Heart right ventricle (tissue), 16 donors: ENCODE measurements at regions of chr11 and their contacts with region 1.

Region 1: DNA sequence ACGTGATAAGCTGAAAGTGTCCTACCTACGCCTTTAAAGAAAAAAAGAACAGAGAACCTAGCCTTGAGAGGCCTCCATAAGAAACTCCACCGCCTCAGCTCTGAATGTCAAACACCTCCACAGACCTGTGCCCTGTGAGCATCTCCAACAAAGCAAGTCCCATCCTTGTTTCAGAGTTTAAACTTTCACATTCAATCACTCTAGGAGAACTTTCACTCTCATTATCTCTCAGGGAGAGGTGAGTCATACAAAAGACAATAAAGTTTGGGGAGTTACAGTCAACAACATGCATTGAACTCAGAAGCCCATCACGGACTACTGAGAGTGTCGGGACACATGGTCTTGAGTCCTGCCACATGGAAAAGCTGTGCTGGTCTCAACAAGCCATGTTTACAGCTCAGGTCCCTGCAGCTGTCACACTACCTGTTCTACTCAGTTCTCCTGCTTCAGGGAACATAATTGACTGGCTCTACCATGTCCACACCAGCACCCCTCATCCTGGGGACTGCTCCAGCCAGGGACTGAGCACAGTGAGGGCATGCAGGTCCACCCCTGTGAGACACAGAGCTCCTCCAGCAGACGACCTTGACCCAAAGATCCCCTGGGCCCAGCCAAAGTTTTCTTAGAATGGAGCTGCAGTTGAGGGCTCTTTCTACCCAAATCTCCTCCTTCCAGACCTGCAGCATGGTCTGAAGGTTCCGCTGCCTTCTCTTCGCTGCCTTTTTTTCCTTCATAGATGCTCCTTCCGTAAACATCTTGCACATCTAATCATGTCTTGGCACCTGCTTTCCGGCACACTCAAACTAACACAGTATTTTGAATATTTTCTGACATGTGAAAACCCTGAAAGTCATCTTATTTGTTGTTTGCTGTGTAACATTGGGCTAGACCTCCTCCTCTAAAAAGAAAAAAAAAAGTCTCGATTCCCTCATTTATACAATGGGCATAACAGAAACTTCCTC is 114.9 kb downstream of the ETS1 start:
- DNase-seq: no peak
- ATAC-seq: no peak
- H3K4me3 ChIP-seq: no peak overlapping the region
- H3K27ac ChIP-seq: peak overlapping the region in 7 of 10 donors; percentile 35 to 84 (median 50)
- H3K4me1 ChIP-seq: peaks cover 30 to 100% (median 96%) of the 10 kb centered on the region in 9 donors
- H3K27me3 ChIP-seq: no peaks in the 10 kb centered on the region
- CTCF ChIP-seq: no peak

Region 2: DNA sequence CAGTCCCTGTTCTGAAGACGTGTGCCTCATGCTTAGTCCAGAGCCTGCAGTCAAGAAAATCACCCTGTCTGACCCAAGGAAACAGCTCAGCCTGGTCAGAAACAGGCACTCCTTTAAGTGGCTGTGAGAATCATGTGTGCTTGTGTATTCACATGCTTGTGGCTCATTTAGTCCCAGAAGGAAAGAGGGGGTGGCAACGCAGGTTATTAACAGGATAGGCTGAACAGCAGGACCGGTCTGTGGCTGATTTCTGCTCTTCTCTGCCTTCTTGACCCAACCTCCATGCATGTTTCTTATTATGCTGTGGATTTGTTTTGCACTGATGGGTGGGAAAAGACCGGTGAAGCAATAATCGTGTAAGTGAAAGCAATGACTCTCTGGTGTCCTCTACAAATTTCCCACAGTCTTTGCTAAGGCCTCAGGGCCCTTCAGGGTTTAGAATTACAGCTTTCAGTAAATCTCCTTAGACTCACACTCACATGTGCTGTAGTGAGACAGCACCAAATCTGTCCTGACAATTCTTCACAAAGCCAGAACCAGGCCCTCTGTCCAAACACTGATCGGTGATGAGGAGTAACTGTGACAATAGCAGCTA is 173.2 kb before region 1 on chr11:
- intact Hi-C with region 1: loop called in 5 of 10 experiments (anchors 5 to 10 kb)
- DNase-seq: no peak
- ATAC-seq: peak in 7 of 8 donors; percentile 19 to 52 (median 34)
- H3K4me3 ChIP-seq: no peak overlapping the region
- H3K27ac ChIP-seq: peak overlapping the region in 9 of 10 donors; percentile 22 to 81 (median 65)
- H3K4me1 ChIP-seq: peaks cover 4 to 70% (median 44%) of the 10 kb centered on the region in 9 donors
- H3K27me3 ChIP-seq: no peaks in the 10 kb centered on the region
- CTCF ChIP-seq: no peak

Region 3: DNA sequence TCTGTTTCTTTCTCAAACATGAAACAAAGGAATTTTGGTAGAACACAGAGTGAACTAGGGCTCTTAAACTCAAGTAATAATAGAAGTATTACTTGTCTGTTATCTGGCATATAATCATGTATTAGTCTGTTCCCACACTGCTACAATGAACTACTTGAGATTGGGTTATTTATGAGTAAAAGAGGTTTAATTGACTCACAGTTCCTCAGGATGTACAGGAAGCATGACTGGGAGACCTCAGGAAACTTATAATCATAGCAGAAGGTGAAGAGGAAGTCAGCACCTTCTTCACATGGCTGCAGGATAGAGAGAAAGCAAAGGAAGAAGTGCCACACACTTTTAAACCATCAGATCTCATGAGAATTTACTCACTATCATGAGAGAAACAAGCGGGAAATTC is 158.5 kb before region 1 on chr11:
- intact Hi-C with region 1: no loop called
- DNase-seq: no peak
- ATAC-seq: no peak
- H3K4me3 ChIP-seq: no peak overlapping the region
- H3K27ac ChIP-seq: no peak overlapping the region
- H3K4me1 ChIP-seq: peaks cover 0 to 12% (median 0%) of the 10 kb centered on the region in 9 donors
- H3K27me3 ChIP-seq: no peaks in the 10 kb centered on the region
- CTCF ChIP-seq: no peak

Region 4: GRCh38 chr11:128336203-128336602 is 136.2 kb before region 1 on chr11:
- intact Hi-C with region 1: loop called in 4 of 10 experiments (anchors 5 to 10 kb)
- DNase-seq: peak; percentile 61 to 67
- ATAC-seq: peak; percentile 24 to 83 (median 68)
- H3K4me3 ChIP-seq: no peak overlapping the region
- H3K27ac ChIP-seq: peak overlapping the region in 7 of 10 donors; percentile 49 to 91 (median 66)
- H3K4me1 ChIP-seq: peaks cover 0 to 62% (median 40%) of the 10 kb centered on the region in 9 donors
- H3K27me3 ChIP-seq: no peaks in the 10 kb centered on the region
- CTCF ChIP-seq: peak in 1 of 9 donors; percentile 10

Region 5: DNA sequence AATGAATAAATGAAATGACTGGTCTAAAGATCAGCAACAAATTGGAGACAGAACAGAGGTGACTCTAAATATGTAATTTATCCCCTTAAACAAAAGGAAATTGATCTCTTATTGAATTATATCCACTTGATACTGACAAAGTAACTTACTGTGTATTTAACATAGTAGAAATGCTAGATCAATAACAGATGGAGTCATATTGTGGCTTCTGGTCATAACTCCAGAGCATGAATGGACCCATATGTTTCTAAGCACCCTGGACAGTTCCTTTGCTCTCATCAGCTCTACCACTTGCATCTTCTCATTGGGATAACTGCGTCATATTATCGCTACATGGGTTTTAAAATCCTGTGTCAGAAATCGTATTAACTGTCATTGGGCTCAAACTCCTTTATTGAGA is 107.4 kb before region 1 on chr11:
- intact Hi-C with region 1: no loop called
- DNase-seq: no peak
- ATAC-seq: no peak
- H3K4me3 ChIP-seq: no peak overlapping the region
- H3K27ac ChIP-seq: no peak overlapping the region
- H3K4me1 ChIP-seq: peaks cover 0 to 7% (median 0%) of the 10 kb centered on the region in 9 donors
- H3K27me3 ChIP-seq: no peaks in the 10 kb centered on the region
- CTCF ChIP-seq: no peak

Region 6: GRCh38 chr11:128422576-128423370 is 49.6 kb before region 1 on chr11:
- intact Hi-C with region 1: loop called in 1 of 10 experiments (anchors 5 kb)
- DNase-seq: peak; percentile 66 to 80
- ATAC-seq: peak in 6 of 8 donors; percentile 44 to 95 (median 66)
- H3K4me3 ChIP-seq: peak overlapping the region in 1 of 10 donors; percentile 6
- H3K27ac ChIP-seq: peak overlapping the region in 8 of 10 donors; percentile 22 to 88 (median 76)
- H3K4me1 ChIP-seq: peaks cover 16 to 48% (median 37%) of the 10 kb centered on the region in 9 donors
- H3K27me3 ChIP-seq: no peaks in the 10 kb centered on the region
- CTCF ChIP-seq: no peak

Region 7: GRCh38 chr11:128522055-128522942 is 49.9 kb after region 1 on chr11:
- intact Hi-C with region 1: loop called in 2 of 10 experiments (anchors 5 to 10 kb)
- DNase-seq: peak; percentile 95 to 96
- ATAC-seq: peak; percentile 93 to 99 (median 96)
- H3K4me3 ChIP-seq: peak overlapping the region; percentile 67 to 92 (median 81)
- H3K27ac ChIP-seq: peak overlapping the region; percentile 91 to 99 (median 98)
- H3K4me1 ChIP-seq: peaks cover 6 to 80% (median 66%) of the 10 kb centered on the region in 9 donors
- H3K27me3 ChIP-seq: no peaks in the 10 kb centered on the region
- CTCF ChIP-seq: peak in 1 of 9 donors; percentile 8